H1 (cell line): ENCODE measurements at regions of chr5 and their contacts with region 1.

Region 1: GRCh38 chr5:113663880-113664541 is 150.5 kb downstream of the YTHDC2 start:
- DNase-seq: peak; percentile 50 to 82
- H3K4me3 ChIP-seq: no peak overlapping the region
- H3K27ac ChIP-seq: no peak overlapping the region
- H3K4me1 ChIP-seq: no peaks in the 10 kb centered on the region; a peak in 1 of 7 replicates
- H3K27me3 ChIP-seq: no peaks in the 10 kb centered on the region
- CTCF ChIP-seq: peak; percentile 69 to 86 (median 78)
- EP300 ChIP-seq: no peak
- POLR2A ChIP-seq: no peak
- RAD21 ChIP-seq: peak; percentile 52 to 65

Region 2: GRCh38 chr5:113606298-113607134 is 57.5 kb before region 1 on chr5:
- CTCF ChIA-PET with region 1: interaction called, 77 read pairs
- POLR2A ChIA-PET with region 1: no interaction called
- DNase-seq: peak; percentile 23 to 73
- H3K4me3 ChIP-seq: no peak overlapping the region
- H3K27ac ChIP-seq: no peak overlapping the region
- H3K4me1 ChIP-seq: no peaks in the 10 kb centered on the region; a peak in 2 of 7 replicates
- H3K27me3 ChIP-seq: no peaks in the 10 kb centered on the region
- CTCF ChIP-seq: peak; percentile 49 to 86 (median 86)
- EP300 ChIP-seq: no peak
- POLR2A ChIP-seq: no peak
- RAD21 ChIP-seq: peak; percentile 97

Region 3: DNA sequence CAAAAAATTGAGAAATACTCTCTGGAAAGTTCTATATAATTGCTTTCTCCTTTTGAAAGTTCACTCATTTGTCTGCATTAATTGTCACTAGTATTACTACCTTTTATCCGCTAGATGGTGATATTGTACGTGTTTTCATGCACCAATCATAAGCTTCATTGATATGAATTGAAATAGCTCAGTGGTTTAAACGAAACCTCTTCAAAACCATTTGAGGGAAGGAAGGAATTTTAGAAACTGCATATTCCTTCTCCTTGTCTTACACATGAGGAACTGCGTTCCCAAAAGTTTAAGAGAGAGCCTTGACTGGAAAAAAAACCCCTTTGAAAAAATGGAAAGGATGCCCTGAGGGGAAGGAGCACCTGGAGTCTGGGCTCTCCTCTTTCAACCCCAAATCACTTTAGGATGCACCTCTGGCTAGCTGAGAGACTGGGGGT is 51.9 kb before region 1 on chr5:
- CTCF ChIA-PET with region 1: interaction called, 77 read pairs
- POLR2A ChIA-PET with region 1: no interaction called
- DNase-seq: no peak
- H3K4me3 ChIP-seq: no peak overlapping the region
- H3K27ac ChIP-seq: no peak overlapping the region
- H3K4me1 ChIP-seq: peaks cover 0 to 3% (median 0%) of the 10 kb centered on the region in 4 experiments; a peak in 1 of 7 replicates
- H3K27me3 ChIP-seq: no peaks in the 10 kb centered on the region
- CTCF ChIP-seq: peak in 2 of 3 experiments; percentile 28 to 58; a peak in 2 of 4 replicates
- EP300 ChIP-seq: no peak
- POLR2A ChIP-seq: no peak
- RAD21 ChIP-seq: peak; percentile 73 to 78

Region 4: GRCh38 chr5:113617191-113617796 is 46.7 kb before region 1 on chr5:
- CTCF ChIA-PET with region 1: interaction called, 77 read pairs
- POLR2A ChIA-PET with region 1: no interaction called
- DNase-seq: no peak
- H3K4me3 ChIP-seq: no peak overlapping the region
- H3K27ac ChIP-seq: no peak overlapping the region
- H3K4me1 ChIP-seq: peaks cover 0 to 3% (median 0%) of the 10 kb centered on the region in 4 experiments; a peak in 1 of 7 replicates
- H3K27me3 ChIP-seq: no peaks in the 10 kb centered on the region
- CTCF ChIP-seq: no peak
- EP300 ChIP-seq: no peak
- POLR2A ChIP-seq: no peak
- RAD21 ChIP-seq: no peak

Region 5: GRCh38 chr5:113634957-113635356 is 29.1 kb before region 1 on chr5:
- CTCF ChIA-PET with region 1: no interaction called
- POLR2A ChIA-PET with region 1: no interaction called
- DNase-seq: no peak
- H3K4me3 ChIP-seq: no peak overlapping the region
- H3K27ac ChIP-seq: no peak overlapping the region
- H3K4me1 ChIP-seq: no peaks in the 10 kb centered on the region
- H3K27me3 ChIP-seq: no peaks in the 10 kb centered on the region
- CTCF ChIP-seq: no peak
- EP300 ChIP-seq: no peak
- POLR2A ChIP-seq: no peak
- RAD21 ChIP-seq: no peak

Region 6: DNA sequence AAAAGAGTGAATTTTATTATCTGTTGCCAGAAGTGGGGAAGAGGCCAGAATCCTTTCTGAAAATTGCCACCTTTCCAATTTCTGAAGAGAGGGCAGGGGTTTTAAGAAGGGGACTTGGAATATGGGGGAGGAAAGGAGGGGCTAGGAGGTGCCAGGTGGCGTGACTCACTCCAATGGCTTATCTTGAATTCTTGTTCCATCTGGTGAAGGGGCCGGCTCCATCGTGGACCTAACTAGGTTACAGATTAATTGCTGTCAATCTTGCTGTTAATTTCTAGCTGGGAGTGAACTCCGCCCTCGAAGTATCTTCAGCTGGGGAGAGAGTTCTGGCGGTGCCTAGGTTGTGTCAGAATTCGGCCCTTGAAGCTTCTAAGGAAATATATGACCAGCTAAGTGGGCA is 11.8 kb before region 1 on chr5:
- CTCF ChIA-PET with region 1: interaction called, 22 read pairs
- POLR2A ChIA-PET with region 1: no interaction called
- DNase-seq: no peak
- H3K4me3 ChIP-seq: no peak overlapping the region
- H3K27ac ChIP-seq: no peak overlapping the region
- H3K4me1 ChIP-seq: no peaks in the 10 kb centered on the region
- H3K27me3 ChIP-seq: no peaks in the 10 kb centered on the region
- CTCF ChIP-seq: no peak
- EP300 ChIP-seq: no peak
- POLR2A ChIP-seq: no peak
- RAD21 ChIP-seq: no peak

Region 7: GRCh38 chr5:113788141-113788655 is 124.2 kb after region 1 on chr5:
- CTCF ChIA-PET with region 1: no interaction called
- POLR2A ChIA-PET with region 1: no interaction called
- DNase-seq: no peak
- H3K4me3 ChIP-seq: no peak overlapping the region
- H3K27ac ChIP-seq: no peak overlapping the region
- H3K4me1 ChIP-seq: no peaks in the 10 kb centered on the region
- H3K27me3 ChIP-seq: no peaks in the 10 kb centered on the region
- CTCF ChIP-seq: no peak
- EP300 ChIP-seq: no peak
- POLR2A ChIP-seq: no peak
- RAD21 ChIP-seq: no peak

Region 8: GRCh38 chr5:113824307-113824706 is 160.3 kb after region 1 on chr5:
- CTCF ChIA-PET with region 1: no interaction called
- POLR2A ChIA-PET with region 1: no interaction called
- DNase-seq: no peak
- H3K4me3 ChIP-seq: no peak overlapping the region
- H3K27ac ChIP-seq: no peak overlapping the region
- H3K4me1 ChIP-seq: no peaks in the 10 kb centered on the region
- H3K27me3 ChIP-seq: no peaks in the 10 kb centered on the region
- CTCF ChIP-seq: peak in 2 of 3 experiments; percentile 24 to 45; a peak in 2 of 4 replicates
- EP300 ChIP-seq: no peak
- POLR2A ChIP-seq: no peak
- RAD21 ChIP-seq: peak; percentile 20 to 37; a peak in 3 of 4 replicates

Region 9: GRCh38 chr5:114113604-114114003 is 449.6 kb after region 1 on chr5:
- CTCF ChIA-PET with region 1: no interaction called
- POLR2A ChIA-PET with region 1: no interaction called
- DNase-seq: no peak
- H3K4me3 ChIP-seq: no peak overlapping the region
- H3K27ac ChIP-seq: no peak overlapping the region
- H3K4me1 ChIP-seq: no peaks in the 10 kb centered on the region
- H3K27me3 ChIP-seq: no peaks in the 10 kb centered on the region
- CTCF ChIP-seq: no peak
- EP300 ChIP-seq: no peak
- POLR2A ChIP-seq: no peak
- RAD21 ChIP-seq: no peak